Activated CD4-positive, alpha-beta memory T cell treated with anti-CD3 and anti-CD28 coated beads for 36 hours (primary cell): ENCODE measurements at regions of chr1 and their contacts with region 1.

Region 1: GRCh38 chr1:243596431-243597062 is 253.5 kb downstream of the AKT3 start:
- DNase-seq: peak; percentile 48
- H3K4me3 Mint-ChIP-seq: peak overlapping the region; percentile 17
- H3K27ac Mint-ChIP-seq: peak overlapping the region; percentile 71
- H3K4me1 Mint-ChIP-seq: peaks cover 29% of the 10 kb centered on the region
- H3K27me3 Mint-ChIP-seq: no peaks in the 10 kb centered on the region

Region 2: GRCh38 chr1:243255791-243256512 is 340.6 kb before region 1 on chr1 and contains the start of gene SDCCAG8:
- CTCF ChIA-PET with region 1: no interaction called
- POLR2A ChIA-PET with region 1: no interaction called
- intact Hi-C with region 1: loop called (anchors 1 kb)
- DNase-seq: peak; percentile 97
- H3K4me3 Mint-ChIP-seq: peak within 1 kb of the TSS; percentile 95
- H3K27ac Mint-ChIP-seq: peak within 1 kb of the TSS; percentile 100
- H3K4me1 Mint-ChIP-seq: peaks cover 40% of the 10 kb centered on the region
- H3K27me3 Mint-ChIP-seq: peaks cover 3% of the 10 kb centered on the region
- total RNA-seq, gene SDCCAG8: 20.7 to 23.2 TPM

Region 3: GRCh38 chr1:243416495-243416894 is 180.1 kb before region 1 on chr1:
- CTCF ChIA-PET with region 1: no interaction called
- POLR2A ChIA-PET with region 1: no interaction called
- intact Hi-C with region 1: loop called (anchors 1 kb)
- DNase-seq: no peak
- H3K4me3 Mint-ChIP-seq: no peak overlapping the region
- H3K27ac Mint-ChIP-seq: peak overlapping the region; percentile 34
- H3K4me1 Mint-ChIP-seq: peaks cover 32% of the 10 kb centered on the region
- H3K27me3 Mint-ChIP-seq: no peaks in the 10 kb centered on the region

Region 4: DNA sequence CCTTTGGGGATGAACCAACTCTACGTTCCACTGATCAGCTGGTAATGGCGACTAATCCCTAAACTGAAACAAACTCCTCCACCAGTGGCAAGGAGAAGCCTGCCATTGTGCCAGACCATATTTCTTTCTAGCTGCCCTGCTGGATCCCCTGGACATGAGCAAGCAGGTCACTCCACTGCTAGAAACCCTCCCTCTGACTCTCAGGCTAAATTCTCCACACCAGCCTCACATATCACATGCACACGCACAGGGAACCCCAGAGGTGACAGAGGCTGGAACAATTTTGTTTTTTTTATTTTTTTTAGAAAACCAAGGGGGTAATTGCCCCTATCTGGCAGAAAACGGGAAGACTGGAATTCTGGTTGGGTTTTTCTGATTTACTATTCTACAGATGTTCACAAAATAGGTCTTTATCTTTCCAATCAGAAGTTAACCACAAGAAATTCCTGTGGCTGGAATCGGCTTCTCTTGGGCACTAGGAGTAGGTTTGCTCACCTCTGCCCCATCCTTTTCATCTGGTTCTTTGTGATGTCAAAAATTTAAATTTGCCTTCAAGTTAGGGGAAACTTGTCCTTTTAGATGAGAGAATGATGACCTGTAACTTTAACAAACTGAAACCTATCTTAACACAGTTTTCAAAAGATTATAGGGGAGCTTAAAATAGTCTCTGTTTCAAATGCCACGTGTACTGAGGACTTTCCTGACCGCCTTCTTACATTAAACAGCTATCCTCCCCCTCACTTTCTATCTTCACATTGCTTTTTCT is 82.6 kb before region 1 on chr1:
- CTCF ChIA-PET with region 1: no interaction called
- POLR2A ChIA-PET with region 1: no interaction called
- intact Hi-C with region 1: loop called (anchors 5 kb)
- DNase-seq: no peak
- H3K4me3 Mint-ChIP-seq: no peak overlapping the region
- H3K27ac Mint-ChIP-seq: no peak overlapping the region
- H3K4me1 Mint-ChIP-seq: peaks cover 17% of the 10 kb centered on the region
- H3K27me3 Mint-ChIP-seq: no peaks in the 10 kb centered on the region

Region 5: GRCh38 chr1:243731301-243731891 is 134.8 kb after region 1 on chr1:
- CTCF ChIA-PET with region 1: no interaction called
- POLR2A ChIA-PET with region 1: no interaction called
- intact Hi-C with region 1: loop called (anchors 10 kb)
- DNase-seq: no peak
- H3K4me3 Mint-ChIP-seq: no peak overlapping the region
- H3K27ac Mint-ChIP-seq: no peak overlapping the region
- H3K4me1 Mint-ChIP-seq: peaks cover 22% of the 10 kb centered on the region
- H3K27me3 Mint-ChIP-seq: no peaks in the 10 kb centered on the region

Region 6: GRCh38 chr1:243798726-243799125 is 202.2 kb after region 1 on chr1:
- CTCF ChIA-PET with region 1: no interaction called
- POLR2A ChIA-PET with region 1: no interaction called
- intact Hi-C with region 1: loop called (anchors 5 kb)
- DNase-seq: peak; percentile 17
- H3K4me3 Mint-ChIP-seq: no peak overlapping the region
- H3K27ac Mint-ChIP-seq: no peak overlapping the region
- H3K4me1 Mint-ChIP-seq: peaks cover 35% of the 10 kb centered on the region
- H3K27me3 Mint-ChIP-seq: no peaks in the 10 kb centered on the region

Region 7: GRCh38 chr1:243837907-243838535 is 241.5 kb after region 1 on chr1:
- CTCF ChIA-PET with region 1: no interaction called
- POLR2A ChIA-PET with region 1: no interaction called
- intact Hi-C with region 1: loop called (anchors 1 kb)
- DNase-seq: no peak
- H3K4me3 Mint-ChIP-seq: no peak overlapping the region
- H3K27ac Mint-ChIP-seq: peak overlapping the region; percentile 2
- H3K4me1 Mint-ChIP-seq: peaks cover 39% of the 10 kb centered on the region
- H3K27me3 Mint-ChIP-seq: no peaks in the 10 kb centered on the region